KBM-7 (cell line): ENCODE measurements at regions of chr20 and their contacts with region 1.

Region 1: DNA sequence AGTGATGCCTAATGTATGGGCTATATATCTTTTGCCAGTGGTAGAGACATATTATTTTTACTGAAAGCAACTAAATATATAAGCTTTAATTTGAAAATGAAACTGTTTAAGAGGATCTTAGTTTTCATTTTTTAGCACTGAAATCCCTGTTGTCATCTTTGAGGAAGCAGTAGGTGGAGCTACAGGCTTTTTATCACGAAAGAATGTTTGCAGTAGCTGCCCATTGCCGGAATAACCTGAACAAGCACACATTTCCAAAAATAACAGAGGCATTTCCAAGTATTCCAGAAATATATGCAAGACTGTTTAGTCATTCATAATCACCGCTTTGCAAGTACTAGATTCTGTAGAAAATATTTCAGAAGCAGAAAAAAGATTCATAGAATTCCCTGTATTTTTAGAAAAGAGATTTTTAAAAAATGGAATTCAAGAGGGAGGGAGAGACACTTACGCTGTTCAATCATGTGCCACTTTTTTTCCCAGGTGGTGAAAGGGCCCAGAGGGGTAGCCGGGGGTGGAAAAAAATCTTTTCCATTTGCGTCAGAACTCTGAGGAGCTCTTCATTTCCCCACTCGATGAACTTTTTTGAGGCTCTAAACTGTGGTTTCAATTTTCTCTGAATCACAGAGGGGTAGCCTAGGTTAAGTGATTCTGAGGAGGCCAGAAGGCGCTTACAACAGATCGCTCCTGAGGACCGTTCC is 142.5 kb upstream of the FERMT1 start:
- DNase-seq: peak; percentile 28

Region 2: DNA sequence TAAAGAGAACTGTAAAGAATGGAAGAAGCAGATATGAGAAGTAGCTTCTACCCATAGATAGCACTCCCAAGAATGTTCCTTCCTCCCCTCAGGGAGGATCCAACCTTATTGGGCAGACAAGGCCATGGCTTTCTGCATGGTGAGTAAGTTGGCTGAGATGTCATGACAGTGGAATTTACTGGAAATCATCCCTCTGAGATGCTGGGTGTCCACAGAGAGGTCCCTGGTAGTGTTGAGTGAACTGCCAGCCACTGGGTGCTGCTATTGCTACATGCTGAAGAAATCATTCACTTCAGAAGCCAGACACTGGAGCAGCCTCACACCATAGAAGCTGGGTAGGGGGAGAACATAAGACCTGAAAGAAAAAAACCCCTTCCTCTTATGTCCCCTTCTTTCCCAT is 96.1 kb before region 1 on chr20:
- in situ Hi-C with region 1: loop called (anchors 25 kb)
- DNase-seq: no peak